ENCODE measurements at regions of chr1 and their contacts with region 1.

Region 1: GRCh38 chr1:209248649-209249279 is 334.8 kb upstream of the CAMK1G start:
- DNase-seq: peak; percentile 91
- H3K4me3 Mint-ChIP-seq: no peak overlapping the region
- H3K27ac Mint-ChIP-seq: no peak overlapping the region
- H3K4me1 Mint-ChIP-seq: peaks cover 5% of the 10 kb centered on the region
- H3K27me3 Mint-ChIP-seq: no peaks in the 10 kb centered on the region
- CTCF ChIP-seq: peak; percentile 99

Region 2: DNA sequence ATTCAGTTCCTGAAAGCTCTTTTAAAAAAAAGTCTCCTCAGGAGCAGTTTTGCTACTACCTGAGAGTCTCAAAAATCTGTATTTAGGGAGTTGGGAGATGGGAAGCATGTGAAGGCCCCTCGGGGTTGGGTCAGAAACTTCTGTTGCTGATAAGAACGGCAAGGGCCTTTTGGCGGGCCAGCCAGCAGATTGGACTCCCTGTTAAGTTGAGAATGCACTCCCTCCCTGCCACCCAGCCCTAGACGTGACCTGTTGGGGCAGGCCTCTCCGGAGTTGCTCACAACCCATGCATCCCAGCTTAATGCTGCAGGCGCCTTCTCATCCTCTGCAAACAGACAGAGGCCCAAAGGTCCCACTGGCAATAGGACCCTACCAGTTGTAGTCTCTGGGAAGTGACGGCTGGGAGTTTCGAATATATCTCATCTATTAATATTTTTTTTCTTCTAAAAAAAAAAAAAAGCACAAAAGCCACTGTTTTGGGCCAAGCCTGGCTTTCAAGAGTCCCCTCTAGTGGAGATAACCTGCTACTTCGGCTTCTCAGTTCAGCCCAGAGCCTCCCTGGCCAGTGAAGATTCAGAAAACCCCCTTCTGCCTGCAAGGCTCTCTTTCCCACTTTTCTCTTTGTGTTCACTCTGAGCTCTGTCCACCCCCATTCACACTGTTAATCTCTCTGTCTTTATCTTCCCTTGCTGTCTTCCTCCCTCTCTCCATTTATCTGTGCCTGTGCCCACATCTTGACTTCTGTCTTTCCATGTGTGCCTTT is 1009.9 kb before region 1 on chr1:
- CTCF ChIA-PET with region 1: interaction called, 21 read pairs
- POLR2A ChIA-PET with region 1: no interaction called
- intact Hi-C with region 1: loop called (anchors 2 kb)
- DNase-seq: peak; percentile 93
- H3K4me3 Mint-ChIP-seq: no peak overlapping the region
- H3K27ac Mint-ChIP-seq: peak overlapping the region; percentile 81
- H3K4me1 Mint-ChIP-seq: peaks cover 60% of the 10 kb centered on the region
- H3K27me3 Mint-ChIP-seq: no peaks in the 10 kb centered on the region
- CTCF ChIP-seq: peak; percentile 98

Region 3: DNA sequence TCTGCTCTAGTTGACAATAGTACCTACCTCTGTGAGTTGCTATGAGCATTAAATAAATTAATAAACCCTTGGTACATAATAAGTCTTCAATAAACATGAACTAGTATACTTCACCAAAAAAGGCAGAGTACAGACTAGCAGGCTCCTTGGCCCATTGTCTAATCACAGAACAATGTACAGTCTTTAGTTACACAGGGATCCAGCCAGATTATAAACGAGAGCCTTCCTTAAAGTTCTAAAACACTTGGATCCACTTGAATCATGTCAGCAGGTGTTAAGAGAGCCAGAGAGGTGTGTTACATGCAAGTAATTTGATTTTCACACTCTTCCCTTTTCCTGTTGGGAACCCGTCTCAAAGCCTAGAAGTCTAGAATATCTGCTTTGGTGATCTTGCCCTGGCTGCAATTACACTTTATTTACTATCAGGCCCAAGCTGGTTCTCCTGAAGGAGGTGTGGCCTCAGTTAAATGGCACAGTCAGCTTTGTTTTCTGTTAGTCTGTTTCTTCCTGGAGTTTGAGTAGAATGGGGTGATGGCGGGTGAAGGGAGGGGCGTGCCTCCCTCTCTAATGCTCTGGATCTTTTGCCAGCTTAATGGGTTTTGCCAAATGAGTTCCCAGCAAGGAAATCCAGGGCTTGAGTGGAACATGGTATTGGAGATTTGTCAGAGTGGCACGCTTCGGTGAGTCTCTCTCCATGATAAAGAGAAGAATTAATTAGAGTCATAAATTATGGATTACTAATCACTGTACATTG is 236.1 kb before region 1 on chr1:
- CTCF ChIA-PET with region 1: no interaction called
- POLR2A ChIA-PET with region 1: no interaction called
- intact Hi-C with region 1: no loop called
- DNase-seq: no peak
- H3K4me3 Mint-ChIP-seq: no peak overlapping the region
- H3K27ac Mint-ChIP-seq: no peak overlapping the region
- H3K4me1 Mint-ChIP-seq: no peaks in the 10 kb centered on the region
- H3K27me3 Mint-ChIP-seq: no peaks in the 10 kb centered on the region
- CTCF ChIP-seq: no peak

Region 4: GRCh38 chr1:209051570-209051969 is 197.2 kb before region 1 on chr1:
- CTCF ChIA-PET with region 1: no interaction called
- POLR2A ChIA-PET with region 1: no interaction called
- intact Hi-C with region 1: no loop called
- DNase-seq: no peak
- H3K4me3 Mint-ChIP-seq: no peak overlapping the region
- H3K27ac Mint-ChIP-seq: no peak overlapping the region
- H3K4me1 Mint-ChIP-seq: peaks cover 7% of the 10 kb centered on the region
- H3K27me3 Mint-ChIP-seq: no peaks in the 10 kb centered on the region
- CTCF ChIP-seq: no peak

Region 5: DNA sequence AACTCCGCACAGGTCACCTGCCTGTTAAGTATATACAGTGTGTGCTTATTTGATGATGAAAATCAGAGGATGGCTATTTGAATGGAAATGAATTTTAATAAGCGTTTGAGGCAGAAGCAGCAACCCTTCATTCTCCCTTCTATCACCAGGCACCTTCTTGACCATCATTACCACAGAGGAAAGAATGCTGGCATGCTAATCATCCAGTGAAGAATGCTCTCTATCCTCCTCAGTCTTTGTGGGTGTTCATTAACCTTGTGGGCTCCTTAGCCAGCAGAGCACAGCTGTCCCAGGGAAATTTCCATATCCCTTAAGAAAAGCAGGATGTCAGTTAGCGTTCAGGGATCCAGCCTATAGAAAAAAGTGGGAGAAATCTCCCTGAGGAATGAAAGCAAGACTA is 93.2 kb before region 1 on chr1:
- CTCF ChIA-PET with region 1: no interaction called
- POLR2A ChIA-PET with region 1: no interaction called
- intact Hi-C with region 1: no loop called
- DNase-seq: no peak
- H3K4me3 Mint-ChIP-seq: no peak overlapping the region
- H3K27ac Mint-ChIP-seq: no peak overlapping the region
- H3K4me1 Mint-ChIP-seq: no peaks in the 10 kb centered on the region
- H3K27me3 Mint-ChIP-seq: peaks cover 74% of the 10 kb centered on the region
- CTCF ChIP-seq: no peak

Region 6: GRCh38 chr1:209229494-209230059 is 19.2 kb before region 1 on chr1:
- CTCF ChIA-PET with region 1: interaction called, 75 read pairs
- POLR2A ChIA-PET with region 1: interaction called, 14 read pairs
- intact Hi-C with region 1: no loop called
- DNase-seq: peak; percentile 87
- H3K4me3 Mint-ChIP-seq: no peak overlapping the region
- H3K27ac Mint-ChIP-seq: no peak overlapping the region
- H3K4me1 Mint-ChIP-seq: peaks cover 13% of the 10 kb centered on the region
- H3K27me3 Mint-ChIP-seq: no peaks in the 10 kb centered on the region
- CTCF ChIP-seq: no peak

Region 7: GRCh38 chr1:209318181-209319056 is 69.7 kb after region 1 on chr1:
- CTCF ChIA-PET with region 1: interaction called, 18 read pairs
- POLR2A ChIA-PET with region 1: no interaction called
- intact Hi-C with region 1: no loop called
- DNase-seq: peak; percentile 66
- H3K4me3 Mint-ChIP-seq: no peak overlapping the region
- H3K27ac Mint-ChIP-seq: no peak overlapping the region
- H3K4me1 Mint-ChIP-seq: peaks cover 16% of the 10 kb centered on the region
- H3K27me3 Mint-ChIP-seq: no peaks in the 10 kb centered on the region
- CTCF ChIP-seq: no peak

Region 8: GRCh38 chr1:209368864-209369598 is 120.3 kb after region 1 on chr1:
- CTCF ChIA-PET with region 1: interaction called, 11 read pairs
- POLR2A ChIA-PET with region 1: interaction called, 4 read pairs
- intact Hi-C with region 1: no loop called
- DNase-seq: peak; percentile 100
- H3K4me3 Mint-ChIP-seq: peak overlapping the region; percentile 40
- H3K27ac Mint-ChIP-seq: peak overlapping the region; percentile 86
- H3K4me1 Mint-ChIP-seq: peaks cover 90% of the 10 kb centered on the region
- H3K27me3 Mint-ChIP-seq: no peaks in the 10 kb centered on the region
- CTCF ChIP-seq: no peak

Region 9: GRCh38 chr1:209428241-209428921 is 179.6 kb after region 1 on chr1:
- CTCF ChIA-PET with region 1: interaction called, 74 read pairs
- POLR2A ChIA-PET with region 1: interaction called, 22 read pairs
- intact Hi-C with region 1: no loop called
- DNase-seq: peak; percentile 99
- H3K4me3 Mint-ChIP-seq: peak overlapping the region; percentile 93
- H3K27ac Mint-ChIP-seq: peak overlapping the region; percentile 90
- H3K4me1 Mint-ChIP-seq: peaks cover 60% of the 10 kb centered on the region
- H3K27me3 Mint-ChIP-seq: no peaks in the 10 kb centered on the region
- CTCF ChIP-seq: no peak

Region 10: DNA sequence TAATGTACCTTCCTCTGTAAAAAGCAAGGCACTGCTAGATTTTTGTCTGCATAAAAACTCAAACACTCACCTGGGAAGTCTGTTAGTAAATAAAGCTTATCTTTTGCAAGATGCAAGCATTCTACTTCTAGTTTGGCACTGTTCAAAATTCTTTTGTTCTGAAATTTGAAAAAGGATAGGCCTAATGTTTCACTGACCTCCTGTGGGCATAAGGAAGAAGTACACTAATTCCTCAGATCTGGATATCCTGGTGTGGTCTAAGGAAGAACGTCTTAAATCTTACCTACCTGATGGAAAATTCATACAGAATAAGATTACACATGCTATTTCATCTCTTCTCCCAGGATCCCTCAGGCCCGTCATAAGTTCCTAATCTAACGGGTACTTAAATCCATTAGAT is 241.2 kb after region 1 on chr1:
- CTCF ChIA-PET with region 1: interaction called, 55 read pairs
- POLR2A ChIA-PET with region 1: interaction called, 5 read pairs
- intact Hi-C with region 1: loop called (anchors 1 kb)
- DNase-seq: peak; percentile 69
- H3K4me3 Mint-ChIP-seq: no peak overlapping the region
- H3K27ac Mint-ChIP-seq: no peak overlapping the region
- H3K4me1 Mint-ChIP-seq: peaks cover 26% of the 10 kb centered on the region
- H3K27me3 Mint-ChIP-seq: no peaks in the 10 kb centered on the region
- CTCF ChIP-seq: peak; percentile 90

Region 11: GRCh38 chr1:210207597-210208450 is 959.1 kb after region 1 on chr1:
- CTCF ChIA-PET with region 1: no interaction called
- POLR2A ChIA-PET with region 1: no interaction called
- intact Hi-C with region 1: no loop called
- DNase-seq: no peak
- H3K4me3 Mint-ChIP-seq: no peak overlapping the region
- H3K27ac Mint-ChIP-seq: no peak overlapping the region
- H3K4me1 Mint-ChIP-seq: no peaks in the 10 kb centered on the region
- H3K27me3 Mint-ChIP-seq: no peaks in the 10 kb centered on the region
- CTCF ChIP-seq: no peak

Measured in MCF 10A (cell line).